Activated CD4-positive, alpha-beta memory T cell treated with anti-CD3 and anti-CD28 coated beads, Interleukin-2, amount 10 ng/mL, durations not matched to agents 7 days and 5 days (primary cell): ENCODE measurements at regions of chr11 and their contacts with region 1.

Region 1: DNA sequence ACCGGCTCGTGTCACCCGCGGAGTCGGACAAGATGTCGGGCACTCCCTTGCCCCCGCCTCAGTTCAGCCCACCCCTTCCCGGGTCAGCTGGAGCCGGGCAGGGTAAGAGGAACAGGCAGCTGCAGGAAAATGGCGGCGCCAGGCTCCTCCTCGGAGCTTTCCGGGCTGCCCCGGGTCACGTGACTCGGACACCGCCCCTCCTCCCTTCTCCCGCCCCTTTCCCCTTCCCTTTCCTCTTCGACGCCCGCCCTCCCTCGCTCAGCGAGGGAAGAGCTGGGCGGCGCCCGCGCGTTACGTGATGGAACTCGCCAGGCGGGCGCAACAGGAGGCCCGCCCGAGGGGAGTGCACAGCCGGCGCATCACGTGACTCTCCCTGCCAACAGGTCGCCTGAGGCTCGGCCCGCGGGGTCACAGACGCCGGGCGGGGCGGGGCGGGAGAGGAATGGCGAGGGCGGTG is at the start of gene PICALM:
- DNase-seq: peak; percentile 98
- H3K4me3 Mint-ChIP-seq: peak within 1 kb of the TSS; percentile 100
- H3K27ac Mint-ChIP-seq: peak within 1 kb of the TSS; percentile 88
- H3K4me1 Mint-ChIP-seq: peaks cover 26% of the 10 kb centered on the region
- H3K27me3 Mint-ChIP-seq: no peaks in the 10 kb centered on the region
- total RNA-seq, gene PICALM: 194 to 199 TPM

Region 2: DNA sequence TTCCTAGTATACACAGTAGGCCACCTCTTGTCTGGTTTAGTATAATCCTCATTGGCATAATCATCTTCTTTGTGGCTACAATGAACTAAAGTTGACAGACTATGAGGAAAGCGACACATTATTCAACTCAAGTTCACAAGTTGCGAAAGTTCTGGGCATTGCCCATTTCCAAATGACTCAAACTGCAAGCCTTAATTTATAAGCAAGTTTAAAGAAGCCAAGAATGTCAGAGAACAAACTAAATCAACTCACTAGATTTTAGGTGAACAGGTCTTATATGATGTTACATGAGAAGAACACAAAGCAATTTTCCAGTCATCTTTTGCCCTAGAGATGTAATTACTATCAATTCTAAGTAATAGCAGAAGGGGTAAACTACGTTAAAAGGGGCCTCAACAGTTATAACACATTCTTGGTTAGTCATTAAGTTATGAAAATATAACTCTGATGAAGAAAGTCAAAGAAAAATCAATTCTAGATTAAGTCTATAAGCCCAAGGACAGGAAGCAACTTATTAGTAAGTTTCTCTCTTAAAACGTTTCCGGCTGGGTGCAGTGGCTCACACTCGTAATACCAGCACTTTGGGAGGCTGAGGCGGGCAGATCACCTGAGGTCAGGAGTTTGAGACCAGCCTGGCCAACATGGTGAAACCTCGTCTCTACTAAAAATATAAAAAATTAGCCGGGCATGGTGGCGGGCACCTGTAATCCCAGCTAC is 21.5 kb before region 1 on chr11:
- CTCF ChIA-PET with region 1: interaction called, 38 read pairs
- POLR2A ChIA-PET with region 1: interaction called, 23 read pairs
- DNase-seq: peak; percentile 65
- H3K4me3 Mint-ChIP-seq: peak overlapping the region; percentile 65
- H3K27ac Mint-ChIP-seq: peak overlapping the region; percentile 91
- H3K4me1 Mint-ChIP-seq: peaks cover 90% of the 10 kb centered on the region
- H3K27me3 Mint-ChIP-seq: no peaks in the 10 kb centered on the region

Region 3: GRCh38 chr11:86116386-86116726 is 47.4 kb after region 1 on chr11:
- CTCF ChIA-PET with region 1: interaction called, 3 read pairs
- POLR2A ChIA-PET with region 1: interaction called, 39 read pairs
- DNase-seq: peak; percentile 44
- H3K4me3 Mint-ChIP-seq: peak overlapping the region; percentile 5
- H3K27ac Mint-ChIP-seq: peak overlapping the region; percentile 67
- H3K4me1 Mint-ChIP-seq: peaks cover 32% of the 10 kb centered on the region
- H3K27me3 Mint-ChIP-seq: peaks cover 3% of the 10 kb centered on the region

Region 4: GRCh38 chr11:86174101-86175046 is 105.4 kb after region 1 on chr11:
- CTCF ChIA-PET with region 1: interaction called, 6 read pairs
- POLR2A ChIA-PET with region 1: interaction called, 62 read pairs
- DNase-seq: no peak
- H3K4me3 Mint-ChIP-seq: no peak overlapping the region
- H3K27ac Mint-ChIP-seq: peak overlapping the region; percentile 16
- H3K4me1 Mint-ChIP-seq: no peaks in the 10 kb centered on the region
- H3K27me3 Mint-ChIP-seq: no peaks in the 10 kb centered on the region

Region 5: DNA sequence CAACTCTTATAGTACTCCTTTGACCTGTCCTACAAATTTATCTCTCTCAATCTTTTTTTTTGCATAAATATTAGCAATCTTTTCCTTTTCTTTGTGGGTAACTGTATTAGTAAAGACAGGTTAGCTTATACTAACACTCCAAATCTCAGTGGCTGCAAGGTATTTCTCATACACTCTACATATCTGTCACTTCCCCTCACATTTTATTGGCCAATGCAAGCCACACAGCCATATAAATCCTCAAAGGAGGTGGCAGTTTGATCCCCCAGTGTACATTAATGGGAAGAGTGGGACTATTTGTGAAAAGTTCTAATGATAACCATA is 133.0 kb after region 1 on chr11:
- CTCF ChIA-PET with region 1: interaction called, 10 read pairs
- POLR2A ChIA-PET with region 1: interaction called, 26 read pairs
- DNase-seq: peak; percentile 31
- H3K4me3 Mint-ChIP-seq: no peak overlapping the region
- H3K27ac Mint-ChIP-seq: no peak overlapping the region
- H3K4me1 Mint-ChIP-seq: peaks cover 16% of the 10 kb centered on the region
- H3K27me3 Mint-ChIP-seq: no peaks in the 10 kb centered on the region